ENCODE measurements at regions of chr1 and their contacts with region 1.

Region 1: DNA sequence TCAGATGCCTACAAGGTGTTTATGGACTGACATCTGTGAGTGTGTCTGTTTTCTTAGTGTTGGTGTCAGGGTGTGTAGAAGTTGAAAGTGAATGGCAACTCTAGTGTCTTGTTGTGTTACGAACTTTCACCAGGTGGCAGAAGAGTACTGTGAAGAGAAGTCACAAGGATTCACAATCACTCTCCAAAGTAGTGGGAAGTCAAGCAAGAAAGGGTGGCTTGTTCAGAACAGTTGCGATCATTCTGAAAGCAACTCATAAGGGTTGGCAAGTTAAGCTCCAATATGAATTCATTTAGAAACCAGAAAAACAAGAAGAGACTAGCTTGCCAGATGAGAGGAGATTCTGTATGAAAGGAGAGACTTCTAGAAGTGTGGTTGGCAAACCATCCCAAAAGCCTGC is 86.1 kb downstream of the FASLG start:
- DNase-seq: peak in 7 of 9 donors; percentile 44 to 72 (median 65)
- ATAC-seq: peak; percentile 79
- H3K4me3 ChIP-seq: no peak overlapping the region
- H3K4me3 Mint-ChIP-seq: peak overlapping the region in 9 of 10 donors; percentile 2 to 78 (median 63)
- H3K27ac ChIP-seq: no peak overlapping the region
- H3K27ac Mint-ChIP-seq: peak overlapping the region in 6 of 9 donors; percentile 14 to 90 (median 80)
- H3K4me1 ChIP-seq: peaks cover 28 to 38% of the 10 kb centered on the region in 2 donors
- H3K4me1 Mint-ChIP-seq: peaks cover 31 to 58% (median 54%) of the 10 kb centered on the region in 7 donors
- H3K27me3 ChIP-seq: no peaks in the 10 kb centered on the region
- H3K27me3 Mint-ChIP-seq: peaks cover 0 to 52% (median 0%) of the 10 kb centered on the region in 5 donors

Region 2: DNA sequence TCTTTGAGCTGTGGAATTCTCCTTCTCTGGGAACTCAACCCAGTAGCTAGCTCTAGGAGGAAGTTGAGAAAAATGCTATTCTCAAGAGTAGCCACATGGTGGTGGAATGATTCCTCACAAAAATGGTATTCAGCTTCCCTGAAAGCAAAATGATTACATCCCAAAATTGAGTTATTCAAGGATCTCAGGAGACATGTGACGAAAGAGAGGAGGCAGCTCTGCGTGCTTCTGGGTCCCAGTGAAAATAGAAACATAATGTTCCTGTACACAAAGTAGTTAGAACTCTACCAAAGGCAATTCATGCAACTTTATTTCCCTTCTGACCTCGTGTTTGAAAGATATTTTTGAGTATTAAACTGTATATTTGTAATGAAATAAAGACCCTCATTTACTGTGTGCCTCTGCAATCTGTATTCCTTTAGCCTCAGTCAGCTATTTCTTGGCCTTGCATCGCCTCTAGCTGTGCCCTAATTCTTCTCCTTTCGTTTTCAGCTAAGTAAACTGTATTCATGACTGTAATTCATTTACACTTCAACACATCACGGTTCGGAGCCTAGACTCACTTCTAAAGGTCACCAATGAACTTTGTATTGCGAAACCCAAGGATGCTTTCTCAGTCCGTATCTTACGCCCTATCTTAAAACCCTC is 81.2 kb after region 1 on chr1:
- CTCF ChIA-PET with region 1: interaction called, 12 read pairs
- POLR2A ChIA-PET with region 1: interaction called, 4 read pairs
- intact Hi-C with region 1: loop called in 1 of 2 experiments (anchors 1 kb)
- DNase-seq: peak in 1 of 9 donors; percentile 15
- ATAC-seq: peak; percentile 49
- H3K4me3 ChIP-seq: no peak overlapping the region
- H3K4me3 Mint-ChIP-seq: no peak overlapping the region
- H3K27ac ChIP-seq: no peak overlapping the region
- H3K27ac Mint-ChIP-seq: no peak overlapping the region
- H3K4me1 ChIP-seq: peaks cover 4 to 11% of the 10 kb centered on the region in 2 donors
- H3K4me1 Mint-ChIP-seq: peaks cover 0 to 10% (median 0%) of the 10 kb centered on the region in 7 donors
- H3K27me3 ChIP-seq: no peaks in the 10 kb centered on the region
- H3K27me3 Mint-ChIP-seq: peaks cover 0 to 28% (median 0%) of the 10 kb centered on the region in 5 donors

Region 3: DNA sequence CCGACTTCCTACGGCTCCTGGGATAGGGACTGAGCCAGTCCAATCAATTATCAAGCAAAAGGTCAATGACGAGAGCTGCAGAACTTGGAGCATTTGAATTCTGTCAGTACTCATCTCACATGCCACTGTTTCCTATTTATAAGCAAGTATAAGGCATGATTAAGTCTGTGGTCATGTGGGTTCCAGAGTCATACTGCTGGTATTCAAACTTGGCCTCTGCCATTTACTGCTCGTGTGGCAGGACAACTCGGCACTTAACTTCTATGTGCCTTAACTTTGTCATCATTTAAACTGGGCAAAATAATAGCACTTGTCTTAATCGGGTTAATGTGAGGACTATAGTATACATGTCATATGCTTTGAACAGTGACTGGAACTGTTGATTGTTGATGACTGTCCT is 350.6 kb after region 1 on chr1:
- CTCF ChIA-PET with region 1: no interaction called
- POLR2A ChIA-PET with region 1: no interaction called
- intact Hi-C with region 1: loop called in 1 of 2 experiments (anchors 10 kb)
- DNase-seq: no peak
- ATAC-seq: no peak
- H3K4me3 ChIP-seq: no peak overlapping the region
- H3K4me3 Mint-ChIP-seq: no peak overlapping the region
- H3K27ac ChIP-seq: no peak overlapping the region
- H3K27ac Mint-ChIP-seq: no peak overlapping the region
- H3K4me1 ChIP-seq: no peaks in the 10 kb centered on the region
- H3K4me1 Mint-ChIP-seq: peaks cover 0 to 2% (median 0%) of the 10 kb centered on the region in 7 donors
- H3K27me3 ChIP-seq: no peaks in the 10 kb centered on the region
- H3K27me3 Mint-ChIP-seq: peaks cover 0 to 18% (median 0%) of the 10 kb centered on the region in 5 donors

Region 4: GRCh38 chr1:173420330-173420806 is 675.4 kb after region 1 on chr1:
- CTCF ChIA-PET with region 1: interaction called, 14 read pairs
- POLR2A ChIA-PET with region 1: no interaction called
- intact Hi-C with region 1: loop called (anchors 1 kb)
- DNase-seq: peak; percentile 25 to 71 (median 59)
- ATAC-seq: peak; percentile 83
- H3K4me3 ChIP-seq: no peak overlapping the region
- H3K4me3 Mint-ChIP-seq: peak overlapping the region in 2 of 10 donors; percentile 29 to 38
- H3K27ac ChIP-seq: no peak overlapping the region
- H3K27ac Mint-ChIP-seq: peak overlapping the region in 1 of 9 donors; percentile 20
- H3K4me1 ChIP-seq: no peaks in the 10 kb centered on the region
- H3K4me1 Mint-ChIP-seq: peaks cover 4 to 10% (median 6%) of the 10 kb centered on the region in 7 donors
- H3K27me3 ChIP-seq: no peaks in the 10 kb centered on the region
- H3K27me3 Mint-ChIP-seq: no peaks in the 10 kb centered on the region

Region 5: DNA sequence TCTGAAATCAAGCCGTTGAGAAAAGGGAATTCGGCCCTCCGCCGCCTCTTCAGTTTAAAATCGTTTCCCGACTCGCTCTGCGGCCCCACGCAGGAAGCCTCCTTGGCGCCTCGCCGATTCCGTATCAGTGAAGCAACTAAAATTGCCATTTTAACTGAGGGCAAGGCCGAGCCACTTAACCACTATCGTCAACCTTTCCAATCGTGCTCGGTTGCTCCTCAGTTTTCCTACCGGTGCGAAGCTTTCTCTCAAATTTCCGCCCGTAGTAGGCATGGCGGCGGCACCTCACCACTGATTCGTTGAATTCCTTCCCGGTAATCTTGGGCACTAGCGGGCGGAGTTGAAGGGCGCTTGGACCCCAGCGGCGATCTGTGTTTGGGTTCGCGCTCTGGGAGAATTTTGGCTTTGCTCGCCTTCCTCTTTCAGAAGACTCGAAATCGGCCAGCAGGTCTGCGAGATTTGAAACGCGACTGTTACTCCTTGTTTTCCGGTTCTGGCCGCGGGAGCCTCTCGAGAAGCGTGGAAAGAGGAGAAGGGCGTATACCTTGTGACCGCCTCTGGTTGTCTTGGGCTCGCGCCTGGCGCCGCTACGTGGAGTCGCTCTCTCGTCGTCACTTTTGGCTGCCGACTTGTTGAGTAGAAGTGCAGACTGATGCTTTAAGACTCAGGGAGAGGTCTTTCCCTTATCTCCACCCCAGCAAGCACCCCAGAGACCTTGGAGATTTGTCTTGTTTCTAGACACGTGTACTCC is 1079.5 kb after region 1 on chr1 and contains the starts of genes CENPL and DARS2:
- CTCF ChIA-PET with region 1: interaction called, 16 read pairs
- POLR2A ChIA-PET with region 1: interaction called, 3 read pairs
- intact Hi-C with region 1: loop called (anchors 1 kb)
- DNase-seq: peak; percentile 67 to 93 (median 91)
- ATAC-seq: peak; percentile 94
- H3K4me3 ChIP-seq: peak within 1 kb of the TSS; percentile 99
- H3K4me3 Mint-ChIP-seq: peak within 1 kb of the TSS; percentile 87 to 99 (median 94)
- H3K27ac ChIP-seq: peak within 1 kb of the TSS; percentile 80
- H3K27ac Mint-ChIP-seq: peak within 1 kb of the TSS; percentile 91 to 98 (median 96)
- H3K4me1 ChIP-seq: peaks cover 10 to 14% of the 10 kb centered on the region in 2 donors
- H3K4me1 Mint-ChIP-seq: peaks cover 32 to 68% (median 50%) of the 10 kb centered on the region in 7 donors
- H3K27me3 ChIP-seq: no peaks in the 10 kb centered on the region
- H3K27me3 Mint-ChIP-seq: no peaks in the 10 kb centered on the region
- total RNA-seq, gene CENPL: 5.2 to 25.1 (median 9.5) TPM
- total RNA-seq, gene DARS2: 3.6 to 26.0 (median 13.5) TPM

Region 6: DNA sequence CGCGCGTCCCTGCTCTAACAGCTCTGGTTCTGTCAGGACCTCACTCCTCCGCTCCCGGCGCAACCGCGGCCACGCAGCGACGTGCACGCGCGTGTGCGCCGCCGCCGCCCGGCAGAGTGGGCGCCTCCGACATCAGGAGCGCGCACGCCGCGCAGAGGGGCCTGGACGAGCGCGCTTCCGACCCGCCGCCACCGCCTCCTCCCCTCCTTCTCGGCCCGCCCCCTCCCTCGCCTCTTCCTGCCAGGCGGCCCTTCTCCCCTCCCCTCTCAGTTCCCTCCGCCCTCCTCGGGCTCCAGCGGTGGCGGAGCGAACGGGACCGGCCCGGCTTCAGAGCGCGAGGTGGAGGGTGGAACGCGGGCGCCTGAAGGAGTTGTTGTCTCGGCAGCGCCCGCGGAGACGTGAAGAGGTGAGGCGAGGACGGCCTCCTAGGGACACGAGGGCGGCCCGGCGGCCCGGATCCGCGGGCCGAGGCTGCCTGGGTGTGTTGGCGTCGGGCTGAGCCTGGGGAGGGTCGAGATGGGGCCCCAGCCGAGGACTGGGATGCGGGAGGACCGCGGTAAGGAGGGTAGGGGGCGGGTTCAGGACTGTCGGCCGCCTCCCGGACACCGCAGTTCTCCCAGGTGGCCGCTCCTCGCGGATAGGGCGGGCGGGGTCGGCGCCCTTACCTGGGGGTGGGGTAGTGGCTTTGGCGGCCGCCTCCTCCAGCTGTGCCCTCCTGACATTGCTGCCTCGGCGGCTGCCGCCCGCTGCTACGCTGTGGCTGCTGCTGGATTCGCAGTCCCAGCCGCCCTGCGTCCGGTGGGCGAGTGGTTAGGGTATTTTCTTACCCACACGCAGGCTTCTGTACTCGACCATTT is 1414.5 kb after region 1 on chr1 and contains the start of gene RABGAP1L:
- CTCF ChIA-PET with region 1: no interaction called
- POLR2A ChIA-PET with region 1: no interaction called
- intact Hi-C with region 1: loop called (anchors 5 to 10 kb)
- DNase-seq: peak; percentile 87 to 95 (median 93)
- ATAC-seq: peak; percentile 96
- H3K4me3 ChIP-seq: peak within 1 kb of the TSS; percentile 72
- H3K4me3 Mint-ChIP-seq: peak within 1 kb of the TSS; percentile 92 to 100 (median 96)
- H3K27ac ChIP-seq: peak within 1 kb of the TSS; percentile 87
- H3K27ac Mint-ChIP-seq: peak within 1 kb of the TSS; percentile 86 to 98 (median 98)
- H3K4me1 ChIP-seq: peaks cover 9 to 20% of the 10 kb centered on the region in 2 donors
- H3K4me1 Mint-ChIP-seq: peaks cover 31 to 59% (median 53%) of the 10 kb centered on the region in 7 donors
- H3K27me3 ChIP-seq: no peaks in the 10 kb centered on the region
- H3K27me3 Mint-ChIP-seq: no peaks in the 10 kb centered on the region
- total RNA-seq, gene RABGAP1L: 51.9 to 97.4 (median 74.3) TPM